CD4-positive, alpha-beta memory T cell (primary cell): ENCODE measurements at regions of chr9 and their contacts with region 1.

Region 1: DNA sequence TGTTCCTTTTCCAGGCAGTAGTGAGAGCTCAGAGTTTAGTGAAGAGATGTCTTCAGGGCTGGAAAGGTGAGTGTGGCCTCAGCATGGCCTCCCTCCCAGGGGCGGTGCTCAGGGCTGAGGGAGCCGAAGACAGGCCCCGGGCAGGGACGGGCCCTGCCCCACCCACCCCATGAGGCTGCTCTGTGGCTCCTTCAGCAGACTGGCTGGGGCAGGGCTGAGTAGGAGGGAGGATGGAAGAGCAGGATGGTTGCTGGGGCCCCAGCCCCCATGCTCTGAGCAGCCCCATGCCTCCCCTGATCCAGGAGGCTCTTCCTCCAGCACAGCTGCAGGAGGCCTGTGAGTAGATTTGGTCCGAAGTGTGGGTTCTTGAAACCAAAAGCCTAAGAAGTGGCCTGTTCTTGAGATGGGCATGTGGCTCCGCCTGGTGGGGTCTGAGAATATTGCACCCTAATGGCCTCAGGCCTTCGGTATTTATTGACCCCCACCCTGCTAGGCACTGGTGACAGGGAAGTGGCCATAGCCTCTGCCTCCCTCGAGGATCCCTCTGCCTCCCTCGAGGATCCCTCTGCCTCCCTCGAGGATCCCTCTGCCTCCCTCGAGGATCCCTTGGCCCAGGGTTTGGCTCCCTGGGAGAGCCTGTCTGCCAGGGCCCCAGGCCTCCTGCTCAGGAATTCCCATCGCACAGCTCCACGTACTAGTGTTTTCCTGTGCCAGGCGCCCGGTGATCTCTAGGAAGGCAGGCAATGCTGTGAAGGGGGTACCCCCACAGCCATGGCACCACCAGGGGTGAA is 65.4 kb upstream of the GARNL3 start:
- DNase-seq: peak; percentile 67 to 74 (median 72)
- H3K4me3 ChIP-seq: no peak overlapping the region
- H3K4me3 Mint-ChIP-seq: no peak overlapping the region
- H3K27ac ChIP-seq: no peak overlapping the region
- H3K27ac Mint-ChIP-seq: no peak overlapping the region
- H3K4me1 ChIP-seq: peaks cover 10% of the 10 kb centered on the region
- H3K4me1 Mint-ChIP-seq: peaks cover 1 to 16% (median 6%) of the 10 kb centered on the region in 4 donors
- H3K27me3 ChIP-seq: no peaks in the 10 kb centered on the region
- H3K27me3 Mint-ChIP-seq: peaks cover 0 to 1% of the 10 kb centered on the region in 2 donors

Region 2: GRCh38 chr9:126420643-126421577 is 778.3 kb before region 1 on chr9:
- CTCF ChIA-PET with region 1: no interaction called
- POLR2A ChIA-PET with region 1: no interaction called
- intact Hi-C with region 1: no loop called
- DNase-seq: no peak
- H3K4me3 ChIP-seq: no peak overlapping the region
- H3K4me3 Mint-ChIP-seq: no peak overlapping the region
- H3K27ac ChIP-seq: no peak overlapping the region
- H3K27ac Mint-ChIP-seq: no peak overlapping the region
- H3K4me1 ChIP-seq: peaks cover 12% of the 10 kb centered on the region
- H3K4me1 Mint-ChIP-seq: peaks cover 7 to 28% (median 19%) of the 10 kb centered on the region in 4 donors
- H3K27me3 ChIP-seq: no peaks in the 10 kb centered on the region
- H3K27me3 Mint-ChIP-seq: no peaks in the 10 kb centered on the region

Region 3: DNA sequence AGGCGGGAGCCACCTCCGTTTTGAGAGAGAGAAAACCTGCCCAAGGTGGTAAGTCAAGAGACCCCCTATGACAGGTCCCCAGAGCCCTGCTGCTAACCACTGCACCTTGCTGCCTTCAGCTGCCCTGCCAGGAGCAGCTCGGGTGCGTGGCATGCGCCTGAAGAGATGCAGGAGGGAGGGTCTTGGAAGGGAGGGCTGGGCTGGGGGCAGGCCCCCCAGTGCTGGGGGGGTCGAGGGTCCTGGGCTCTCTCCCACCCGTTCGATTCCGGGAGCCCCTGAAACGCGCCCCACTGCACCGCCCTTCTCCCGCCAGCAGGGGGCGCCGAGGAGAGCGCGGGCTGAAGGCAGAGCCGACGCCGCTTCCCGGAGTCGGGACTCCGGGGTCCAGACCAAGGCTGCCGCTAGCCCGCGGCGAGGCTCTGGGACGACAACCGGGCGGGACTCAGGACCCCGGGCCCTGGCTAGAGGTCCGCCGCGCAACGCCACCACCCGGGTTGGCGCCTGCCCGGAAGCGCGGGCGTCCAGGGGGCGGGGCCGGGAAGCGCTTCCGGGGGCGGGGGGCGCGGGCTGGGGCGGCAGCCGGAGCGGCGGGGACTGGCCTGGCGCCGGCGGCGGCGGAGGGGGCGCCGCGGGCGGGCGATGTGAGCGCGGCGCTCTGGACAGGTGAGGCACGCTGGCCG is 339.0 kb before region 1 on chr9 and contains the start of gene ZBTB34:
- CTCF ChIA-PET with region 1: no interaction called
- POLR2A ChIA-PET with region 1: no interaction called
- intact Hi-C with region 1: loop called (anchors 2 kb)
- DNase-seq: peak; percentile 62 to 87 (median 79)
- H3K4me3 ChIP-seq: peak within 1 kb of the TSS; percentile 63 to 64
- H3K4me3 Mint-ChIP-seq: peak within 1 kb of the TSS; percentile 84 to 92 (median 88)
- H3K27ac ChIP-seq: peak within 1 kb of the TSS; percentile 60
- H3K27ac Mint-ChIP-seq: peak within 1 kb of the TSS; percentile 80 to 90 (median 88)
- H3K4me1 ChIP-seq: peaks cover 29% of the 10 kb centered on the region
- H3K4me1 Mint-ChIP-seq: peaks cover 18 to 43% (median 25%) of the 10 kb centered on the region in 4 donors
- H3K27me3 ChIP-seq: no peaks in the 10 kb centered on the region
- H3K27me3 Mint-ChIP-seq: peaks cover 0 to 1% of the 10 kb centered on the region in 2 donors
- total RNA-seq, gene ZBTB34: 9.4 to 10.1 TPM

Region 4: DNA sequence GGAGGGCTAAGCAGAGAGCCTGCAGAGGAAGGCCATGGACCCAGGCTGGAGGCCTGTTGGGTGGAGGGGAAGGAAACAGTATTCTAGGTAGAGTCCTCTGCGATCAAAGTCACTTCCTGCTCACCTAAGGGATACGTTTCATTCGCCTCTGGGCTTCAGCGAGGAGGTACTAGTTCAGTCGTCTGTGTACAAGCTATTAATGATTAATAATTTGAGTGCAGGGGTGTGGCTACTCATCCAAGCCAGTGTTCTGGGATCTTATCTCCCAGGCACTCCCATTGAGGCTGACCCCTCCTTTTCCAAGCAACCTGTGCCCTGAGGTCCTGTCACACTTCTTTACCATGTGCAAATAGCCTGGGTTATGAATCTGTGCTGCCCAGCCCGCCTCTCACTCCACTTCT is 259.4 kb before region 1 on chr9:
- CTCF ChIA-PET with region 1: interaction called, 175 read pairs
- POLR2A ChIA-PET with region 1: interaction called, 9 read pairs
- intact Hi-C with region 1: no loop called
- DNase-seq: no peak
- H3K4me3 ChIP-seq: no peak overlapping the region
- H3K4me3 Mint-ChIP-seq: no peak overlapping the region
- H3K27ac ChIP-seq: no peak overlapping the region
- H3K27ac Mint-ChIP-seq: no peak overlapping the region
- H3K4me1 ChIP-seq: peaks cover 4% of the 10 kb centered on the region
- H3K4me1 Mint-ChIP-seq: peaks cover 4 to 11% (median 5%) of the 10 kb centered on the region in 4 donors
- H3K27me3 ChIP-seq: no peaks in the 10 kb centered on the region
- H3K27me3 Mint-ChIP-seq: no peaks in the 10 kb centered on the region

Region 5: GRCh38 chr9:126965541-126966428 is 233.4 kb before region 1 on chr9:
- CTCF ChIA-PET with region 1: interaction called, 96 read pairs
- POLR2A ChIA-PET with region 1: no interaction called
- intact Hi-C with region 1: loop called (anchors 1 kb)
- DNase-seq: peak in 4 of 5 donors; percentile 35 to 49 (median 42)
- H3K4me3 ChIP-seq: no peak overlapping the region
- H3K4me3 Mint-ChIP-seq: no peak overlapping the region
- H3K27ac ChIP-seq: no peak overlapping the region
- H3K27ac Mint-ChIP-seq: peak overlapping the region in 1 of 7 donors; percentile 48
- H3K4me1 ChIP-seq: no peaks in the 10 kb centered on the region
- H3K4me1 Mint-ChIP-seq: peaks cover 6 to 13% (median 10%) of the 10 kb centered on the region in 4 donors
- H3K27me3 ChIP-seq: no peaks in the 10 kb centered on the region
- H3K27me3 Mint-ChIP-seq: peaks cover 0 to 1% of the 10 kb centered on the region in 2 donors

Region 6: GRCh38 chr9:127545196-127546124 is 346.3 kb after region 1 on chr9:
- CTCF ChIA-PET with region 1: no interaction called
- POLR2A ChIA-PET with region 1: no interaction called
- intact Hi-C with region 1: no loop called
- DNase-seq: no peak
- H3K4me3 ChIP-seq: no peak overlapping the region
- H3K4me3 Mint-ChIP-seq: no peak overlapping the region
- H3K27ac ChIP-seq: no peak overlapping the region
- H3K27ac Mint-ChIP-seq: peak overlapping the region in 2 of 7 donors; percentile 36 to 46
- H3K4me1 ChIP-seq: no peaks in the 10 kb centered on the region
- H3K4me1 Mint-ChIP-seq: peaks cover 8 to 29% (median 15%) of the 10 kb centered on the region in 4 donors
- H3K27me3 ChIP-seq: no peaks in the 10 kb centered on the region
- H3K27me3 Mint-ChIP-seq: no peaks in the 10 kb centered on the region